H1 (cell line): ENCODE measurements at regions of chr3 and their contacts with region 1.

Region 1: GRCh38 chr3:154954753-154955152 is 125.4 kb upstream of the MME start:
- DNase-seq: no peak
- H3K4me3 ChIP-seq: no peak overlapping the region
- H3K27ac ChIP-seq: no peak overlapping the region
- H3K4me1 ChIP-seq: no peaks in the 10 kb centered on the region
- H3K27me3 ChIP-seq: no peaks in the 10 kb centered on the region
- CTCF ChIP-seq: peak in 2 of 3 experiments; percentile 42 to 68; a peak in 2 of 4 replicates
- EP300 ChIP-seq: no peak
- POLR2A ChIP-seq: no peak
- RAD21 ChIP-seq: peak; percentile 78 to 81

Region 2: GRCh38 chr3:154971771-154972326 is 17.1 kb after region 1 on chr3:
- CTCF ChIA-PET with region 1: interaction called, 11 read pairs
- POLR2A ChIA-PET with region 1: no interaction called
- DNase-seq: no peak
- H3K4me3 ChIP-seq: no peak overlapping the region
- H3K27ac ChIP-seq: no peak overlapping the region
- H3K4me1 ChIP-seq: no peaks in the 10 kb centered on the region
- H3K27me3 ChIP-seq: no peaks in the 10 kb centered on the region
- CTCF ChIP-seq: no peak
- EP300 ChIP-seq: no peak
- POLR2A ChIP-seq: no peak
- RAD21 ChIP-seq: no peak

Region 3: GRCh38 chr3:155323063-155323666 is 368.4 kb after region 1 on chr3:
- CTCF ChIA-PET with region 1: interaction called, 37 read pairs
- POLR2A ChIA-PET with region 1: no interaction called
- DNase-seq: peak in 1 of 2 experiments; percentile 10
- H3K4me3 ChIP-seq: no peak overlapping the region
- H3K27ac ChIP-seq: no peak overlapping the region
- H3K4me1 ChIP-seq: no peaks in the 10 kb centered on the region
- H3K27me3 ChIP-seq: no peaks in the 10 kb centered on the region
- CTCF ChIP-seq: peak in 2 of 3 experiments; percentile 77 to 82; a peak in 3 of 4 replicates
- EP300 ChIP-seq: no peak
- POLR2A ChIP-seq: no peak
- RAD21 ChIP-seq: peak; percentile 98